Calu3 (cell line): ENCODE measurements at regions of chr17 and their contacts with region 1.

Region 1: GRCh38 chr17:57357399-57357807 is 101.1 kb downstream of the MSI2 start:
- DNase-seq: peak; percentile 67
- H3K4me3 Mint-ChIP-seq: peak overlapping the region; percentile 66
- H3K27ac Mint-ChIP-seq: peak overlapping the region; percentile 83
- H3K4me1 Mint-ChIP-seq: peaks cover 28% of the 10 kb centered on the region
- H3K27me3 Mint-ChIP-seq: no peaks in the 10 kb centered on the region
- CTCF ChIP-seq: no peak

Region 2: DNA sequence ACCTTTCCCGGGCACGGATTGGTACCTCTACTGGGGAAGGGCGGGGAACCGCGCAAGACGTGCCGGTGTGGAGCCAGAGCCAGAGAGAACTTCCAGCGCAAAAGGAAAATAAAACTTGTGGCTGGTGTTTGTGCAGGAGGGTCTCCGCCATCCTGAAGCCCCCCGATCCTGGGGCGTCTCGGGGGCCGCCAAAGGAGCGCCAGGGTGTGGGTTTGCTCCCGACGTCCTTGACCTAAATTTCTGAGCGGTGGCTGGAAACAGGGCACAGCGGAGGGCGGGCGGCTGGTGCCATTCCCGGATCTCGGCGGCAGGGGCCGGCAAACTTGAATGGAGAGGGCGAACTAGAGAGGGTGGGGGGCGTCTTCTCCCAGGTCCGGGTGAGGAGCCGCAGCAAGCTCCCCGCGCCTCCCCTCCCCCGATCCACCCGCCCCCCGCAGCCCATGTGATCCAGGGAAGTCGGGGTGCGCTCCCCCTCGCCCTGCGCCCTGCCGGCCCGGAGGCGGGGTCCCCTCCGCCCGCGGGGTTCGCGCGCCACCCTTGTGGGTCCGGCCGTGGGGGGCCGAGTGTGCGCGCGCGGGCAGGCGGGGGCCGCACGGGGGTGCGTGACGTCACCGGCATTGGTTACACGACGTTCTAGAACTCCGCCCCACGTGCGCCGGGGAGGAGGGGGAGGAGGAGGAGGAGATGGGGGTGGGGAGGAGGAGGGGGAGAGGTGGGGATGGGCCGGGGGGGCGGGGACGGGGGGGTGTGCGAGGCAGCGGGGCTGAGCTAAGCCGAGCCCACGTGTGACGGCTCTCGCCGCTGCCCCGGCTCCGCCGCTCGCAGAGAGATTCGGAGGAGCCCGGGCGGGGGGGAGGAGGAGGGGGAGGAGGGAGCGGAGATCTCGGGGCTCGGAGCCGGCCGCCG is 101.4 kb before region 1 on chr17 and contains the start of gene MSI2:
- CTCF ChIA-PET with region 1: no interaction called
- intact Hi-C with region 1: loop called (anchors 5 kb)
- DNase-seq: peak; percentile 75
- H3K4me3 Mint-ChIP-seq: peak within 1 kb of the TSS; percentile 86
- H3K27ac Mint-ChIP-seq: peak within 1 kb of the TSS; percentile 90
- H3K4me1 Mint-ChIP-seq: peaks cover 11% of the 10 kb centered on the region
- H3K27me3 Mint-ChIP-seq: no peaks in the 10 kb centered on the region
- CTCF ChIP-seq: no peak
- total RNA-seq, gene MSI2: 66.4 and 69.5 TPM in 2 replicates

Region 3: DNA sequence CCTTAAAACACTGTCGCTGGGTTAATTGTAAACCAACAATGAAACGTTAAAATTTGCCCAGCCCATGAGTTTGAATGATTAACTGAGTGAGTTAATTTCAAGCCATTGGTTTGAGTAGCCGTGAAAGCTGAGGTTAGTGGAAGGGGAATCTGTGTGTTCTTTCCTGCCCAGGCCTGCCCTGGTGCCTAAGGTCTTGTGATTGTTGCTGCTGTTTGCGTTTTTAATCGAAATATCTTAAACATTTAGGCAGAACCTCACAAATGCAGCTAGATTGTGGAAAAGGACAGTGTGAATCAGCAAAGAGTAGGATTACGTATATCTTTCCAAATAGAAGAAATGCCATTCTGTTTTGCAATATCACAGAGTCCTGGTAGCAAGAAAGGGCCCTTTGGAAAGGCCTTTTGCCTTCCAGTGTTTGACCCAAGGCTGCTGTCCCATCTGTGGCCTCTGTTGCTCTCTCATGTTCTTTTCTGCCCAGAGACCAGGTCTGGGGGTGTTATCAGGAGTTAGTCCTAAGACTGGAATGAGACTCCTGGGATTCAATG is 12.7 kb after region 1 on chr17:
- CTCF ChIA-PET with region 1: interaction called, 6 read pairs
- intact Hi-C with region 1: loop called (anchors 2 kb)
- DNase-seq: peak; percentile 17
- H3K4me3 Mint-ChIP-seq: no peak overlapping the region
- H3K27ac Mint-ChIP-seq: peak overlapping the region; percentile 88
- H3K4me1 Mint-ChIP-seq: peaks cover 48% of the 10 kb centered on the region
- H3K27me3 Mint-ChIP-seq: no peaks in the 10 kb centered on the region
- CTCF ChIP-seq: no peak

Region 4: GRCh38 chr17:57440522-57441485 is 83.4 kb after region 1 on chr17:
- CTCF ChIA-PET with region 1: interaction called, 11 read pairs
- intact Hi-C with region 1: loop called (anchors 5 kb)
- DNase-seq: peak; percentile 71
- H3K4me3 Mint-ChIP-seq: peak overlapping the region; percentile 57
- H3K27ac Mint-ChIP-seq: peak overlapping the region; percentile 89
- H3K4me1 Mint-ChIP-seq: peaks cover 55% of the 10 kb centered on the region
- H3K27me3 Mint-ChIP-seq: no peaks in the 10 kb centered on the region
- CTCF ChIP-seq: peak; percentile 30